Posterior vena cava (tissue), 2 donors: ENCODE measurements at regions of chr5 and their contacts with region 1.

Region 1: GRCh38 chr5:171629221-171630026 is 156.2 kb upstream of the SMIM23 start:
- DNase-seq: no peak

Region 2: GRCh38 chr5:171418316-171418981 is 211.0 kb before region 1 on chr5:
- intact Hi-C with region 1: loop called in 1 of 2 experiments (anchors 5 kb)
- DNase-seq: peak; percentile 95

Region 3: GRCh38 chr5:171845857-171846256 is 216.4 kb after region 1 on chr5:
- intact Hi-C with region 1: loop called in 1 of 2 experiments (anchors 10 kb)
- DNase-seq: peak; percentile 87

Region 4: DNA sequence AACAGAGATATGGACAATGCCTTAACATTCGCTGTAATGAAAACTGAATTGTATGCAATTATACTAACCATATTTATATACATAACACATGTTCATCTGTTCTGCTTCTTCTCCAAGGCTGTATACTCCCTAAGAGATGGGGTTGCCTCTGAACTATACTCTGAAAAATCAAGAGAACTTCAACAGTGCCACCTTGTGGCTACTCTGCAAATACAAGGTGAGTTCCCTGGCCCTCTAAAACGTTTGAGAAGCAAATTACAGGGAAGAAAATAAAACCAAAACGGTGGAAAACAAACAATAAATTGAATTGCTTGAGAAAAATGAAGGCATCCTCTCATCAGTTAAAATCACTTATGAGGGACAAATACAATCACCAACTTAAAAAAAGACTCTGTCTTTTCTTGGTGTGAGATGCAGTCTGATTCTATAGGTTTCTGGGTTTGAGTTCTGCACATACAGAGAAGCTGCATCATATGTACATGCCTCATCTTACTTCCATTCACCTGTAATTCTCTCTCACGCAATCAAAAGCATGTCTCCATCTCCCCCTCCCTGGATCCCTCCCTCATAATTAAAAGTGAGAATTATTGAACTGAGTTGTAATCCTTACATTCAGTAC is 278.4 kb after region 1 on chr5:
- intact Hi-C with region 1: loop called (anchors 10 kb)
- DNase-seq: no peak